OCI-LY7 (cell line): ENCODE measurements at regions of chr13 and their contacts with region 1.

Region 1: GRCh38 chr13:92164822-92165221 is 766.4 kb downstream of the GPC5 start:
- DNase-seq: no peak
- H3K4me3 ChIP-seq: no peak overlapping the region
- H3K27ac ChIP-seq: no peak overlapping the region
- H3K4me1 ChIP-seq: no peaks in the 10 kb centered on the region
- CTCF ChIP-seq: no peak

Region 2: DNA sequence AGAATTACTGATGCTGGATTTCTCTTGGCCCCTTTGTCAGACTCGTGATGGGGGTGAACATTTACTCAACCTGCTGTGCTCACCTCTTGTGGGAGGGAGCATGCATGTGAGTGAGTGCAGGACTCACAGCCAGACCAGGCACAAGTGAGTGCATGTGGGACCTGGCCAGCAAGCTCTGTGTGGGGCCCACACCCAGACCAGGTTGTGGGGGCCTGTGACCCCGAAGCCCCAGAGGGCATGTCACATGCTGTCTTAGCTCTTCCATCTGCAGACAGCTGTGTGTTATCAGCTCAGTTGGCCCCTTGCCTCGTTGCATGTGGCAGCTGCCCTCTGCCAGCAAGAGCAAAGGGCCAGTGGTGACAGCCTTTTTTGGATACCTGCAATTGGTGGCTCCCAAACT is 152.0 kb before region 1 on chr13:
- CTCF ChIA-PET with region 1: no interaction called
- POLR2A ChIA-PET with region 1: no interaction called
- intact Hi-C with region 1: no loop called
- DNase-seq: no peak
- H3K4me3 ChIP-seq: no peak overlapping the region
- H3K27ac ChIP-seq: no peak overlapping the region
- H3K4me1 ChIP-seq: no peaks in the 10 kb centered on the region
- CTCF ChIP-seq: no peak

Region 3: DNA sequence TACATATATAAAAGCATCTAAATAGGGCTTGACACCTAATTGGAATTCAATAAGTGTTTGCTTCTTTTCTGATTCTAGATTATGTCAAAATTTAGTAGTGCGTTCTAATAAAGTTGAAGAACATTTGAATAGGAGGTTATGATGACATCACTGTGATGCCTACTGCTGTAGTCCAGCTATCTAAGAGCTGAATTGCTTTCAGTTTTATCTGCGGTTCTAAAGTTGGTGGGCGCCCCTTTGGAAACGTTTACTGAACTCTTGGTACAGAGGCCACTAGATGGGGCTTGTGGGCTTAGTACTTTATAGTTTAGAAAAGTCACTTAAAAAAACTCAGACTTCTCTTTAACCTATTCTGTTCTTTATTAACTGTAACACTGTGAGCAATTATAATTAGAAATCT is 10.5 kb after region 1 on chr13:
- CTCF ChIA-PET with region 1: no interaction called
- POLR2A ChIA-PET with region 1: interaction called, 26 read pairs
- intact Hi-C with region 1: no loop called
- DNase-seq: peak; percentile 51
- H3K4me3 ChIP-seq: no peak overlapping the region
- H3K27ac ChIP-seq: no peak overlapping the region
- H3K4me1 ChIP-seq: no peaks in the 10 kb centered on the region
- CTCF ChIP-seq: no peak